K562 (cell line): ENCODE measurements at regions of chr5 and their contacts with region 1.

Region 1: GRCh38 chr5:28265877-28266276 is 1227.5 kb upstream of the CDH9 start:
- DNase-seq: no peak
- ATAC-seq: no peak
- H3K4me3 ChIP-seq: no peak overlapping the region
- H3K27ac ChIP-seq: no peak overlapping the region
- H3K4me1 ChIP-seq: no peaks in the 10 kb centered on the region
- H3K27me3 ChIP-seq: no peaks in the 10 kb centered on the region
- CTCF ChIP-seq: no peak
- EP300 ChIP-seq: no peak
- POLR2A ChIP-seq: no peak
- RAD21 ChIP-seq: no peak

Region 2: GRCh38 chr5:28877050-28877449 is 611.2 kb after region 1 on chr5:
- CTCF ChIA-PET with region 1: no interaction called
- POLR2A ChIA-PET with region 1: no interaction called
- in situ Hi-C with region 1: loop called (anchors 10 kb)
- intact Hi-C with region 1: no loop called
- DNase-seq: no peak
- ATAC-seq: no peak
- H3K4me3 ChIP-seq: no peak overlapping the region
- H3K27ac ChIP-seq: no peak overlapping the region
- H3K4me1 ChIP-seq: no peaks in the 10 kb centered on the region
- H3K27me3 ChIP-seq: no peaks in the 10 kb centered on the region
- CTCF ChIP-seq: no peak
- EP300 ChIP-seq: no peak
- POLR2A ChIP-seq: no peak
- RAD21 ChIP-seq: no peak